ENCODE measurements at regions of chr20 and their contacts with region 1.

Region 1: DNA sequence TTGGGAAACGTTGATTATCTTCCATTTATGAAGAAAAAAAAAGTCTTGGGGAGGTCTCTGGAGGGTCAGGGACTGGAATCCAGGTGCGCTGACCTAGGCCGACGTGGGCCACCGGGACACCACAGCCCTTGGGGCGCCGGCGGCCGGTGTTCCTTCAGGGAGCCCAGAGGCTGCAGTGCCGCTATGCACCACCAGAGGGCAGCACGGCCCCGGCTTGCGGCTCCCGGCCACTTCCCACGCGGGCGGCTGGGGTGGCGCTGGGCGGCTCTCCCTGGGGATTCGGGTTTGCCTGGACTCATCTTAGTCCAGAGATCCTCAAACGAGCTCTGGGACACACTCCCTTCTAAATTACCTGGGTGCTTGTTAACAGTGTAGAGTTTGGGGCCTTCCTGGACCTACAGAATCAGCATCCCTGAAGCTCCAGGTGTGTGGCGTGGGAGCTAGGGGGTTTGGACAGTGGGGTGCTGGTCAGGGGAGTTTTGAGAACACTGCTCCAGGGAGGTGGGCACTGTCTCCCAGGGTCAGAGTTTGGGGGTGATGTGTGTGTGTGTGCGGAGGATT is 23.0 kb upstream of the GTSF1L start:
- DNase-seq: peak; percentile 71
- H3K4me3 Mint-ChIP-seq: no peak overlapping the region
- H3K27ac Mint-ChIP-seq: peak overlapping the region; percentile 72
- H3K4me1 Mint-ChIP-seq: peaks cover 46% of the 10 kb centered on the region
- H3K27me3 Mint-ChIP-seq: no peaks in the 10 kb centered on the region

Region 2: DNA sequence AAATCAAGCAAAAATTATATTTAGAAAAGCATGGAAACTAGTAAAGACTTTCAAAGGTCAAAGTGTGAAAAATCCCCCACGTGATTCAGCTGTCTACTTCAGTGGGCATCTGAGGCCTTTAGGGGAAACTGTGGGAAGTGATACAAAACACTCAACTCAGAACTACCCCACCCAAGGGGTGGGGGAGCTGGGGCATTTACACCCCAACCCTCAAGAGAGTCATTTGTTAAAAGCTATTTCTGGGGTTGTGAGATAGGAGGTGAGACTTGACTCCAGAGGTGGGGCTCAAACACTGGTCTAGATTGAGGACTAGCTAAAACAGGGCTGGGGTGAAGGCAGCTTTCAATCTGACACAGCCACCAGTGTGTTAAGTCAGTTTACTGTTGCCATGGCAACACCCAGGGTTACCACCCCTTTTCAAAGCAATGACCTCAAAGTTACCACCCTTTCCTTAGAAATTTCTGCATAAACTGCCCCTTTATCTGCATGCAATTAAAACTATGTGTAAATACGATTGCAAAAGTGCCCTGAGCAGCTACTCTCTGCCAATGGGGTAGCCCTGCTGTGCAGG is 13.1 kb before region 1 on chr20:
- intact Hi-C with region 1: loop called (anchors 2 kb)
- DNase-seq: peak; percentile 49
- H3K4me3 Mint-ChIP-seq: no peak overlapping the region
- H3K27ac Mint-ChIP-seq: peak overlapping the region; percentile 75
- H3K4me1 Mint-ChIP-seq: peaks cover 35% of the 10 kb centered on the region
- H3K27me3 Mint-ChIP-seq: peaks cover 1% of the 10 kb centered on the region

Region 3: GRCh38 chr20:43840382-43841070 is 90.7 kb after region 1 on chr20:
- intact Hi-C with region 1: loop called (anchors 1 kb)
- DNase-seq: peak; percentile 26
- H3K4me3 Mint-ChIP-seq: no peak overlapping the region
- H3K27ac Mint-ChIP-seq: peak overlapping the region; percentile 56
- H3K4me1 Mint-ChIP-seq: peaks cover 60% of the 10 kb centered on the region
- H3K27me3 Mint-ChIP-seq: peaks cover 2% of the 10 kb centered on the region

Region 4: DNA sequence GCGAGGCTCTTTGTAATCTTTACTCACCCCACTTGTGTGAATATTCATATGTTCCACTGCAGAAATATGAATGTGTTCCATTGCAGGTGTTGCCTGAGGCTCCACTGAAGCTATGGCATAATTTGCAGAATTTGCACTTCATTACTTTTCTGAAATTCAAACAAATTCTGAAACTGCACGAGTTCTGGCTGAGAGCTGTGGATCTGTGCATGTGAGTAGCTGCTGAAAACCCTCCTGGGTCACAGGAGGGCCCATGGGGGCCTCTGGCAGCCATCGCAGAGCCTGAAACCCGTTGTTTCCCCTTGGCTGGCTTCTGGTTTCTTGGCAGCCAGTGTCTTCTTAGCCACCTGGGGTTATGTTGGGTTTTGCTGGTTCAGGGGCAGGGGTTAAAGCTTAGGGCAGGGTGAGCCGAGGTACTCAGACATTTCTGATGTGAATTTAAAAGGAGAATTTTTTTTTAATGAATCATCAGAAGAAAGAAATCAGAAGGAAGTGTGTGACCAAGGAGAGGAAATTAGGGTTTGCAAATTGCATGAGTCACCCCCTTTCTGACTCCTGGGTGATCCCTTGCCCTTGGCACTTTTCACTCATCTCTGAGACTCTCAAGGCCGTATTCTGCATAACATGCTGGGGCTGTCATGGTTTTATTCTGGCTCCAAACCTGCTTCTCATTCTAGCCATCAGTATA is 205.4 kb after region 1 on chr20:
- intact Hi-C with region 1: loop called (anchors 1 kb)
- DNase-seq: peak; percentile 40
- H3K4me3 Mint-ChIP-seq: peak overlapping the region; percentile 24
- H3K27ac Mint-ChIP-seq: peak overlapping the region; percentile 77
- H3K4me1 Mint-ChIP-seq: peaks cover 65% of the 10 kb centered on the region
- H3K27me3 Mint-ChIP-seq: peaks cover 26% of the 10 kb centered on the region

Region 5: GRCh38 chr20:44080646-44081267 is 330.9 kb after region 1 on chr20:
- intact Hi-C with region 1: loop called (anchors 1 kb)
- DNase-seq: peak; percentile 58
- H3K4me3 Mint-ChIP-seq: no peak overlapping the region
- H3K27ac Mint-ChIP-seq: no peak overlapping the region
- H3K4me1 Mint-ChIP-seq: peaks cover 23% of the 10 kb centered on the region
- H3K27me3 Mint-ChIP-seq: peaks cover 7% of the 10 kb centered on the region